ENCODE measurements at regions of chr12 and their contacts with region 1.

Region 1: GRCh38 chr12:94649349-94650142 is 811 bp downstream of the TMCC3 start:
- DNase-seq: peak; percentile 24
- H3K4me3 ChIP-seq: peak overlapping the region; percentile 63 to 84
- H3K27ac ChIP-seq: peak overlapping the region; percentile 63 to 83
- H3K4me1 ChIP-seq: peaks cover 3% of the 10 kb centered on the region
- H3K27me3 ChIP-seq: no peaks in the 10 kb centered on the region
- CTCF ChIP-seq: peak in 2 of 4 experiments; percentile 52 to 53
- POLR2A ChIP-seq: no peak

Region 2: GRCh38 chr12:94297876-94298505 is 351.6 kb before region 1 on chr12:
- intact Hi-C with region 1: no loop called
- DNase-seq: no peak
- H3K4me3 ChIP-seq: no peak overlapping the region
- H3K27ac ChIP-seq: no peak overlapping the region
- H3K4me1 ChIP-seq: no peaks in the 10 kb centered on the region
- H3K27me3 ChIP-seq: no peaks in the 10 kb centered on the region
- CTCF ChIP-seq: no peak
- POLR2A ChIP-seq: no peak

Region 3: GRCh38 chr12:94560431-94561221 is 88.9 kb before region 1 on chr12:
- intact Hi-C with region 1: loop called (anchors 5 kb)
- DNase-seq: peak; percentile 22
- H3K4me3 ChIP-seq: no peak overlapping the region
- H3K27ac ChIP-seq: peak overlapping the region in 1 of 2 donors; percentile 16
- H3K4me1 ChIP-seq: peaks cover 6% of the 10 kb centered on the region
- H3K27me3 ChIP-seq: no peaks in the 10 kb centered on the region
- CTCF ChIP-seq: peak in 1 of 4 experiments; percentile 18
- POLR2A ChIP-seq: no peak